Heart right ventricle (tissue), 16 donors: ENCODE measurements at regions of chr21 and their contacts with region 1.

Region 1: DNA sequence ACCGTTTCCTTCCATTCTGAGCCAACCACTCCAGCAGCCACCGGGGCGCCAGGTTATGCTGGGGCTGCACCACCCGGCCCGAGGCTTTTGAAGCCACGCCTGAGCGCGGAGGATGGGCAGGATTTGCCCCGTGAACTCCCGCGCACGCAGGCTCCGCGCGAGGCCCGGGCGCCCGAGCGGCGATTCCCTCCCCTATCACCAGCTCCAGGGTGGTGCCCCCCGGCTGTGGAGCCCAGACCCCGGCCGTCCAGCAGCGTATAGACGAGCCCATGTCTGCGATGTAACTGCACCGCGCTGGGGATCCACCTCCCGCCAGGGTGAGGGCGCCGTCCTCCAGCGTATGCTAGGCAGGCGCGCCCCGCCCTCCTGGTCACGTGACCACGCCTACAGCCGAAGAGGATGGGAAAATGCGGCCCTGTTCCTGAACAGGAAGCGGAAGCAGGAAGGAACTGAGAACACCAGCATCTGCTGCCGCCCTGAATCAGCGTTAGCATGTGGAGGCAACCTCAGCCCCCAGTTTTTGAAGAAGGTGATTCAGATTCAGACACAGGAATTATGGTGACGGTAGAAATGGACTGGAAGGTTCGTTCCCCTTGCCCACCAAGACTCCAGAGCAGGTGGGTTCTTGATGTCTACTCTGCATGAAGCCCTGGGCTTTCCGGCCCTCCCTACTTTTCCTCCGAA is 46.0 kb downstream of the VPS26C start:
- DNase-seq: peak; percentile 95
- ATAC-seq: peak; percentile 95 to 98 (median 98)
- H3K4me3 ChIP-seq: peak overlapping the region; percentile 47 to 76 (median 64)
- H3K27ac ChIP-seq: peak overlapping the region; percentile 76 to 91 (median 85)
- H3K4me1 ChIP-seq: peaks cover 0 to 16% (median 9%) of the 10 kb centered on the region in 9 donors
- H3K27me3 ChIP-seq: no peaks in the 10 kb centered on the region
- CTCF ChIP-seq: peak in 7 of 9 donors; percentile 42 to 75 (median 66)

Region 2: GRCh38 chr21:37153196-37153934 is 67.8 kb before region 1 on chr21:
- intact Hi-C with region 1: no loop called
- DNase-seq: no peak
- ATAC-seq: peak in 2 of 8 donors; percentile 9 to 17
- H3K4me3 ChIP-seq: no peak overlapping the region
- H3K27ac ChIP-seq: peak overlapping the region in 6 of 10 donors; percentile 32 to 67 (median 64)
- H3K4me1 ChIP-seq: peaks cover 0 to 14% (median 10%) of the 10 kb centered on the region in 9 donors
- H3K27me3 ChIP-seq: no peaks in the 10 kb centered on the region
- CTCF ChIP-seq: no peak

Region 3: DNA sequence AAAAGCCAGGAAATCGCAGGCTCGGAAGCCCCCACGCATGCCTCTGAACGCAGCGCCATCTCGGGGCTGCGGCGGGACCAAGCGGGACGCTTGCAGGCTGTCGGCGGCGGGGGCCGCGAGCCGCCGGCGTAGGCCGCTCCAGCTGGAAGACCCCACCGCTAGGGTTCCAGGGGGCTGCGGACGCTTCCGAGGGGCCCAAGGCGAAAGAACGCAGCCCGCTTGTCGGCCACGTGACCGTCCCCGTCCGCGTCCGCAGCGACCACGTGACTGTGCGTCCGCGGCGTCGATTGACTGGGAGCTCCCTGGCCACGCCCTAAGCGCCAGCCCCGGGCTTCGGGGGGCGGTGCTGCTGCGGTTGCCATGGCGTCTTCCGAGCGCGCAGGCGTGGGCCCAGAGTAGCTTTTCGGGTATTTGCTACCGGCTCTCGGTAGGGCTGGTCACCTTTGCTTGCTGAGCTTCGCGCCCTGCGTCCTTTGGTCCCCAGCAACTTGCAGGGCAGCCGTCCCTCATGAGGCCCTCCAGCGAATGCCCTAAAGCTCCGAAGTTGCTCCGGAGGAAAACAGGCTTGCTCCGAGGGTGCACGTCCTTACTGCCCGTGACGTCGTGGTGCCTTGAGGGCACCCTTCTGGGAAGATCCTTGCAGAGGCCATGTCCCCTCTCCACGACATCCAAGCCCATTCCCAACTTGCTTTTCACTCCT is 342.7 kb after region 1 on chr21:
- intact Hi-C with region 1: loop called in 1 of 10 experiments (anchors 10 kb)
- DNase-seq: peak; percentile 93
- ATAC-seq: peak; percentile 94 to 98 (median 97)
- H3K4me3 ChIP-seq: peak overlapping the region; percentile 58 to 92 (median 70)
- H3K27ac ChIP-seq: peak overlapping the region; percentile 55 to 98 (median 94)
- H3K4me1 ChIP-seq: peaks cover 0 to 40% (median 26%) of the 10 kb centered on the region in 9 donors
- H3K27me3 ChIP-seq: no peaks in the 10 kb centered on the region
- CTCF ChIP-seq: peak in 7 of 9 donors; percentile 34 to 69 (median 46)

Region 4: GRCh38 chr21:37582590-37582989 is 361.5 kb after region 1 on chr21:
- intact Hi-C with region 1: loop called in 1 of 10 experiments (anchors 10 kb)
- DNase-seq: peak in 1 of 2 donors; percentile 39
- ATAC-seq: peak in 7 of 8 donors; percentile 51 to 81 (median 77)
- H3K4me3 ChIP-seq: no peak overlapping the region
- H3K27ac ChIP-seq: no peak overlapping the region
- H3K4me1 ChIP-seq: peaks cover 0 to 13% (median 0%) of the 10 kb centered on the region in 9 donors
- H3K27me3 ChIP-seq: no peaks in the 10 kb centered on the region
- CTCF ChIP-seq: peak; percentile 39 to 75 (median 66)

Region 5: GRCh38 chr21:37855635-37856625 is 634.8 kb after region 1 on chr21:
- intact Hi-C with region 1: no loop called
- DNase-seq: no peak
- ATAC-seq: no peak
- H3K4me3 ChIP-seq: no peak overlapping the region
- H3K27ac ChIP-seq: no peak overlapping the region
- H3K4me1 ChIP-seq: no peaks in the 10 kb centered on the region
- H3K27me3 ChIP-seq: peaks cover 0 to 9% (median 0%) of the 10 kb centered on the region in 7 donors
- CTCF ChIP-seq: no peak